Activated CD4-positive, alpha-beta memory T cell treated with anti-CD3 and anti-CD28 coated beads, Interleukin-2, amount 10 ng/mL, durations not matched to agents 7 days and 5 days (primary cell): ENCODE measurements at regions of chr5 and their contacts with region 1.

Region 1: DNA sequence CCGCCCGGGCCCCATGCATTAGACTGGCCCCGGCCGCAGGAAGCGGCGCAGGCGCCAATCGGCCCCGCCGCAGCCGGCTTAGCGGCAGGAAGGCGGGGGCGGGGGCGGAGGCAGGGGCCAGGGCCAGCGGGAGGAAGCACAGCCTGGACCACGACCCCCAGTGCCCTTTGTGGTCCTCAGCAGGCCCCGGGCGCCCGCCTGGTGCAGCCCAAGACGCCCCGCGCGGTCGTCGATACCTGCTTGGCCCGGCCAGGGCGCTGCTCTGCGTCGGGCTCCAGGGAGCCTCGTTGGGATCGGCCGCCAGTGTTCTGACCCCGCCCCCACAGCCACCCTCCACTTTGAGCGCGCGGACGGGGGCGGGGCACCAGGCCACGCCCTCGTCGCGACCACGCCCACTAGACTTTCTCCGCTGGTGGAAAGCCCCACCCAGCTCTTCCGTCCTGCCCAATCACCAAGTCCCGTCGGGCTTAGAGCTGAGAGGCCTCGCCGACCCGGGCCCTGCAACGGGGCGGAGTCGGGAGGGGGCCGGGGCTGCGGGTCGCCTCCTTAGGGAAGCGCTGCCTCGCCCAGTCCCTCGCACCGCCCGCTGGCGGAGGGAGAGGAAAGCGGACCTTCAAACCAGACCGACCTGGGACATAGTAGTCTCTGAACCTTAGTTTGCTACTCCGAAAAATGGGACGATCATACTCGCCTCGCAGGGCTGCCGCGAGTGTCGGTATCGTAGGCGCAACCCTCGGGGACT is at the start of gene PDLIM7:
- DNase-seq: peak; percentile 96
- H3K4me3 Mint-ChIP-seq: peak within 1 kb of the TSS; percentile 85
- H3K27ac Mint-ChIP-seq: peak within 1 kb of the TSS; percentile 42
- H3K4me1 Mint-ChIP-seq: peaks cover 49% of the 10 kb centered on the region
- H3K27me3 Mint-ChIP-seq: peaks cover 21% of the 10 kb centered on the region
- total RNA-seq, gene PDLIM7: 55.1 to 56.6 TPM

Region 2: DNA sequence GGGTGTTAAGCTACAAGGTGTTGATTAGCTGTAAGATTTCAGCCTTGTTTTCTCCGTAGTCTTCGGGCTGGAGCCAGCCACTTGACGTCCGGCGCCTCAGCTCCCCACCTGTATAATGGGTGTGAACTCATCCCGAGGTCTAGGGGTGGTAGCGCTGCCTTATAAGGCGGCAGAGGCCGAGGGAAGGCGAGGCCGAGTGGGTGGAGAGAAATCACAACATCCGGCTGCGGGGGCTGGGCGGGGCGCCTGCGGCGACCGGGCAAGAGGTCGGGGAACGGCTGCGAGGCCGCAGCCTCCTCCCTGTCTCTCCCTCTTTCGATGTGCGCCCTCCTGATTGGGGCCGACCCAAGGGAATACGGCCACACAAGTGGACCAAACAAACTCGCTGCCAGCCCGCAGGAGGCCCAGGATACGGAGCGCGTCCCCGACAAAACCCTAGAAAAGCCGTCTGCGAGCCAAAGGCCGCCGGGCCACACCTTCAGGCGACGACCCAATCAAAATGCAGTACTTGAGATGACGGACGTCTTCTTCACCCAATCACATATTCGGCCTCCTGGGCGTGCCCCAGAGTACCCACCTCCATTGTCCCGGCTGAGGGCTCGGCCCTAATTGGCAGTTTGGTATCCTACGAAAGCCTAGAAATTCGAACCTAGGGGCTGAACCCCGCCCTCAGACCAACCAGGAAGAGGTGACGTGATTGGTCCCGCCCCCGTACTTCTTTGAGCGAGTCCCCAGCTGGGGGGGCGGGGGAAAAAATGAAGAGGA is 71.5 kb before region 1 on chr5:
- CTCF ChIA-PET with region 1: interaction called, 6 read pairs
- POLR2A ChIA-PET with region 1: interaction called, 10 read pairs
- DNase-seq: peak; percentile 100
- H3K4me3 Mint-ChIP-seq: peak overlapping the region; percentile 95
- H3K27ac Mint-ChIP-seq: peak overlapping the region; percentile 98
- H3K4me1 Mint-ChIP-seq: peaks cover 44% of the 10 kb centered on the region
- H3K27me3 Mint-ChIP-seq: no peaks in the 10 kb centered on the region

Region 3: DNA sequence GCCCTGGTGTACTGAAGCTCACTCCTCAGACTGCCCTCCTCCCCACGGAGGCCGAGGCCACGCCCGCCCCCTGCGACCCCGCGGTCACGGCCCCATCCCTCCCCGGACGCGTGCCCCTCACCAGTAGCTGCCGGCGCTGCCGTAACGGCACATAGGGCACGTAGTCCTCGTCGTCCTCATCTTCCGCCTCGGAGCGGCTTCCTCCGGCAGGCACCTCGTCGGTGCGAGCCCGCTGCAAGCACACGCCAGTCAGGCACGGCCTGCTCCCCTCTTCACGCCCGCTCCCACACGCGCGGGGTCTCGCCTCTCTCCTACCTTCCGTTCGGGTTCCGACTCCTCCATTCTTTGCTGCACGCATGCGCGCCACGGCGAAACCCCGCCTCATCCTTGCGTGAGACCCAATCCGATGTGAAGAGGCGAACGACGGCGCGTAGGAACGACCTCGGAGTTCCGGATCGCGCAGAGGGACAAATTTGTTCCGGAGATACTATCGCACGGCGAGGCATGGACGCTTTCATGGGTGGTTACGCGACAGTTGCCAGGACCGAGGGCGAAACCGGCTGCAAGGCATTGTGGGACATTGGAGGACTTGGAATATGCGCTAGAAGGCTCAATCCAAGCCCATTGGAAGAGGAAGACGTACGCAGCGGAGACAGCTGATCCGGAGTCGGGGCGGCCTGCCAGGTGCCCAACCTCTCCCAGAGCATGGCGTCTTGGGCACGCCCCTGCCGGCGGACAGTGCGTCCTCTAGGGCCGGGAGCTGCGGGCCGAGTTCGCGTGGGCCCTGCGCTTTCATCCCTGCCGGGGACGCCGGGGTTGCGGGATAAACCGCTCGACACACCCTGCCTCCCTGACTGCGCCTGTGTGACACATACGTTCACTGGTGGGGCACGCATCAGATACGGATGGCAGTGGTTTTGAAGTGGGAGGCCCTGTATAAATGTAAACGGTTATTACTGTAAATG is 19.4 kb after region 1 on chr5 and contains the start of gene DDX41:
- CTCF ChIA-PET with region 1: interaction called, 21 read pairs
- POLR2A ChIA-PET with region 1: interaction called, 12 read pairs
- DNase-seq: peak; percentile 97
- H3K4me3 Mint-ChIP-seq: peak within 1 kb of the TSS; percentile 90
- H3K27ac Mint-ChIP-seq: peak within 1 kb of the TSS; percentile 81
- H3K4me1 Mint-ChIP-seq: peaks cover 53% of the 10 kb centered on the region
- H3K27me3 Mint-ChIP-seq: no peaks in the 10 kb centered on the region
- total RNA-seq, gene DDX41: 105 to 107 TPM

Region 4: GRCh38 chr5:177576169-177576568 is 78.7 kb after region 1 on chr5:
- CTCF ChIA-PET with region 1: no interaction called
- POLR2A ChIA-PET with region 1: no interaction called
- DNase-seq: no peak
- H3K4me3 Mint-ChIP-seq: no peak overlapping the region
- H3K27ac Mint-ChIP-seq: no peak overlapping the region
- H3K4me1 Mint-ChIP-seq: no peaks in the 10 kb centered on the region
- H3K27me3 Mint-ChIP-seq: peaks cover 7% of the 10 kb centered on the region